ENCODE measurements at regions of chr2 and their contacts with region 1.

Region 1: GRCh38 chr2:108594132-108594981 is 60.1 kb downstream of the LIMS1 start:
- DNase-seq: peak; percentile 65
- H3K4me3 Mint-ChIP-seq: peak overlapping the region; percentile 83
- H3K27ac Mint-ChIP-seq: peak overlapping the region; percentile 92
- H3K4me1 Mint-ChIP-seq: peaks cover 52% of the 10 kb centered on the region
- H3K27me3 Mint-ChIP-seq: no peaks in the 10 kb centered on the region

Region 2: DNA sequence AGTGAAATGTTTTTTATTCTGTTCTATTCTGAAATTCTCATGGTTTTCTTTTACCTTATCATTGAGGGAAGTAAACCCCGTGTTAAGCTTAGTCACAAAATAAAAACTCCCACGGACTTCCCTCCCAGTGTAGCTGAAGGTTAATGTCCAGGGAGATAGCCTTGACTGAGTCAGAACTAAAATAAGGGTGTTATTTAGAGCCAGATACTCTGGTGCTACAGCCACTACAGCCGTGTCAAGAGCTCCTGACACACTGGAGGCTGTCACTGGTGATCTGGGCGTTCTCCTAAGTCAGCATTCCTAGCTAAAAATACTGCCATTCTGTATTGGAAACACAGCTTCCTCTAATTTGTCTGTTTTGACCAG is 42.9 kb after region 1 on chr2:
- intact Hi-C with region 1: loop called (anchors 1 kb)
- DNase-seq: no peak
- H3K4me3 Mint-ChIP-seq: peak overlapping the region; percentile 45
- H3K27ac Mint-ChIP-seq: peak overlapping the region; percentile 79
- H3K4me1 Mint-ChIP-seq: peaks cover 60% of the 10 kb centered on the region
- H3K27me3 Mint-ChIP-seq: no peaks in the 10 kb centered on the region

Region 3: DNA sequence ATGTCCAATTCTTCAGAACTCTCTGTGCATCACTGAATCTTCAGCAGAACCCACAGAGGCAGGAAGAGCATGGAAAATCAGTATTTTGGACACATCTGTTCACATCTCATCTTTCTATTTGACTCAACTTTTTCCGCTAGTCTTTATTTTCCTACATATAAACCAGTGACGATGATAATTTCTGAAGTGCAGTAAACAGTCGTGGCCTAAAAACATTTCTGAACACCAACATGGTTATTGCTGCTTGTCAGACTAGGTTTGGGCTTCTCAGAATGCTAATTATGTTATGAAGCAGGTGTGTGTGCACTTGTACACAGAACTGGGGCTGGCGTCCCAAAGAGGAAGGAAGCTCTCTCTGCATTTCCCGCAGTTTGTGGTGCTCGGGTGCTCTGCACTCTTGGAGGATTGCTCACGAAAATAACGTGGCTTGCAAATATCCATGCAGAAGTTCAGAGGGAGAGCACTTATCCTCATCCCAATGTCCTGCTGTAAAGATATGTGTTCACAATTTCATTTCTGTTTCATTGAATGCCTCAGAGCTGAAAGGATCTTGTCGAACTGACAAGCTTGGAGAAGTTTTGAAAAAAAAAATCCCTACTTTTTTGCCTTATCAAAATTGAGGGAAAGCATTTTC is 343.8 kb after region 1 on chr2:
- intact Hi-C with region 1: loop called (anchors 5 kb)
- DNase-seq: peak; percentile 70
- H3K4me3 Mint-ChIP-seq: peak overlapping the region; percentile 48
- H3K27ac Mint-ChIP-seq: peak overlapping the region; percentile 85
- H3K4me1 Mint-ChIP-seq: peaks cover 12% of the 10 kb centered on the region
- H3K27me3 Mint-ChIP-seq: no peaks in the 10 kb centered on the region

Measured in activated CD4-positive, alpha-beta T cell treated with anti-CD3 and anti-CD28 coated beads, Interleukin-2, amount 10 ng/mL, durations not matched to agents 24 days and 14 days (primary cell).